HCT116 (cell line): ENCODE measurements at regions of chr9 and their contacts with region 1.

Region 1: DNA sequence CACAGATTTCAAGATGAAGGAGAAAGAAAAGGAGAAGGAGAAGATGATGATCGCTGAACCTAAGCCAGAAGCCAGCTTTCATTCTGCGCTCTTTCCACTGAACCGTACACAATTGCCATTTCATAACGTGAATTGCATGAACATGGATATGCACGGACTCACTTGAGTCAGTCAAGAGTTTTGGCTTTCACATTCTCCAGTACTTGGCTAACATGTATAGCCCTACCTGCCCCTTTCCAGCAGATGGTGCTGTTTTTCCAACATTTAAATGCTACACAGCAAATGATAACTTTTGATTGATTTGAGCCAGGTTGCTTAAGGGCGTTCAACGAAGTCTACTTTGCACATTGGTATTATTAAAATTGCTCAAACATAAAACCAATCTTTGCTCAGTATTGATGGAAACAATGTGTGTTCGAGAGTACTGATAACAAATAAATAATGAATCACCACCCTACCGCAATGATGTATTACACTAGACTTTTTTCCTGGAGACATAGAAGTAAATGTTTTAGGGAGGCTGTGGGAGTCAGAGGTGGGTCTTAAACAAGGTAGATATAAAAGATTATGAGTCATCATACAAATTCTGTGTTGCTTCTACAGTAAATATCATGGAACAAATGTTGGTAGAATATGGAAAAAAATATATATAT is 196.4 kb downstream of the TRPM3 start:
- DNase-seq: peak; percentile 48
- ATAC-seq: peak; percentile 82
- H3K4me3 ChIP-seq: no peak overlapping the region
- H3K27ac ChIP-seq: no peak overlapping the region
- H3K4me1 ChIP-seq: no peaks in the 10 kb centered on the region
- H3K27me3 ChIP-seq: peaks cover 6% of the 10 kb centered on the region; the same call in 1 of the 2 replicates
- CTCF ChIP-seq: peak; percentile 67 to 79 (median 69); a peak in 5 of 6 replicates
- POLR2A ChIP-seq: no peak
- RAD21 ChIP-seq: peak; percentile 70

Region 2: DNA sequence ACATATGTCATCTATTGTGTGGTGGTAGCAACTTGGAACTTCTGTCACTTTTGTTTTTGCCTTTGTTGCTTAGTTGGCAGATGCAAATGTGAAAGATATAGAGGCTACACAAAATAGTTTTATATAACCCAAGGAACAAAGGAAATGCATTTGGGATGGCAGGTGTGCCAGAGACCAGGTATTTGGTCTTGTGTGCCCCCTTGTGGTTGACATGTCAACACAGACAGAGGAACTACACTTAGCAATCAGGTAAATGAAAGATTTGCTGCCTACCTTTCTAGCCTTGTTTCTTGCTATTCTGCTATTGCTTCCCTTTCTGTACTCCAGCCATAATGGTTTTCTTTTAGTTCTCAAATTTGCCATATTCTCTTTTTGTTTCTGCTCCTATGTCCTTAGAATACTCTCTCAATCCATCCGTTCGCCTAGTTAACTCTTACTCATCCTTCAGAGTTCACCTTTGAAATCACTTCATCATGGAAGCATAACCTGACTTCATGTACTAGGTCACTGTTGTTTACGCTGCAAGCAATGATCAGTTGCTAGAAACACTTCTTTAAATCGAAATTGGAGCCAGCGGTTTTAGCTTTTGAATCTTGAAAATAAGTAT is 76.9 kb after region 1 on chr9:
- CTCF ChIA-PET with region 1: interaction called, 4 read pairs
- POLR2A ChIA-PET with region 1: no interaction called
- RAD21 ChIA-PET with region 1: no interaction called
- intact Hi-C with region 1: loop called (anchors 1 kb)
- DNase-seq: peak; percentile 23
- ATAC-seq: peak; percentile 80
- H3K4me3 ChIP-seq: no peak overlapping the region
- H3K27ac ChIP-seq: no peak overlapping the region
- H3K4me1 ChIP-seq: no peaks in the 10 kb centered on the region
- H3K27me3 ChIP-seq: peaks cover 1% of the 10 kb centered on the region; the same call in 1 of the 2 replicates
- CTCF ChIP-seq: peak; percentile 59 to 77 (median 68); a peak in 5 of 6 replicates
- POLR2A ChIP-seq: no peak
- RAD21 ChIP-seq: peak; percentile 62

Region 3: GRCh38 chr9:71249729-71250317 is 324.8 kb after region 1 on chr9:
- CTCF ChIA-PET with region 1: interaction called, 6 read pairs
- POLR2A ChIA-PET with region 1: no interaction called
- RAD21 ChIA-PET with region 1: no interaction called
- intact Hi-C with region 1: loop called (anchors 1 kb)
- DNase-seq: peak; percentile 43
- ATAC-seq: peak; percentile 78
- H3K4me3 ChIP-seq: no peak overlapping the region
- H3K27ac ChIP-seq: no peak overlapping the region
- H3K4me1 ChIP-seq: no peaks in the 10 kb centered on the region
- H3K27me3 ChIP-seq: peaks cover 2% of the 10 kb centered on the region; the same call in 1 of the 2 replicates
- CTCF ChIP-seq: peak; percentile 65 to 98 (median 82)
- POLR2A ChIP-seq: no peak
- RAD21 ChIP-seq: peak; percentile 64